Heart left ventricle (tissue), 16 donors: ENCODE measurements at regions of chr10 and their contacts with region 1.

Region 1: DNA sequence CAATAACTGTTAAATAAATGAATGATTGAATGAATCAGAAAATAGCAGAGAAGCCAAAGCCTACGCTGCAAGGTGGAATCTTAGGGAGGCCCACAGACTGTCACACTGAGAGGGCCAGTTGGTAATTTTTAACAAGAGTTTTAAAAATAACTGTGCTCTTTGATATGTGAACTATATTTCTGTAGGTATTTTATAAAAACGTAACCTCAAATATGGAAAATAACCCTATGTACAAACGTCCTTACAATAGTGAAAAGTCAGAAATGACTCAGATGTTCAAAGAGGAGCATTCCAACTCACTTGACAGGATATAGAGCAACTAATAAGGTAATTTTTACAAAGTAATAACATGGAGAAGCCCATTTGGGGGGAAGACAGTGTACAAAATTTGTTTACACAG is 18.9 kb upstream of the TMEM273 start:
- DNase-seq: no peak
- ATAC-seq: no peak
- H3K4me3 ChIP-seq: no peak overlapping the region
- H3K27ac ChIP-seq: no peak overlapping the region
- H3K4me1 ChIP-seq: peaks cover 0 to 6% (median 0%) of the 10 kb centered on the region in 12 donors
- H3K27me3 ChIP-seq: no peaks in the 10 kb centered on the region
- CTCF ChIP-seq: no peak
- POLR2A ChIP-seq: no peak

Region 2: GRCh38 chr10:49474901-49475300 is 267.8 kb after region 1 on chr10:
- intact Hi-C with region 1: loop called in 1 of 10 experiments (anchors 5 kb)
- DNase-seq: no peak
- ATAC-seq: no peak
- H3K4me3 ChIP-seq: no peak overlapping the region
- H3K27ac ChIP-seq: no peak overlapping the region
- H3K4me1 ChIP-seq: peaks cover 0 to 3% (median 0%) of the 10 kb centered on the region in 12 donors
- H3K27me3 ChIP-seq: no peaks in the 10 kb centered on the region
- CTCF ChIP-seq: no peak
- POLR2A ChIP-seq: no peak